ENCODE measurements at regions of chr16 and their contacts with region 1.

Region 1: DNA sequence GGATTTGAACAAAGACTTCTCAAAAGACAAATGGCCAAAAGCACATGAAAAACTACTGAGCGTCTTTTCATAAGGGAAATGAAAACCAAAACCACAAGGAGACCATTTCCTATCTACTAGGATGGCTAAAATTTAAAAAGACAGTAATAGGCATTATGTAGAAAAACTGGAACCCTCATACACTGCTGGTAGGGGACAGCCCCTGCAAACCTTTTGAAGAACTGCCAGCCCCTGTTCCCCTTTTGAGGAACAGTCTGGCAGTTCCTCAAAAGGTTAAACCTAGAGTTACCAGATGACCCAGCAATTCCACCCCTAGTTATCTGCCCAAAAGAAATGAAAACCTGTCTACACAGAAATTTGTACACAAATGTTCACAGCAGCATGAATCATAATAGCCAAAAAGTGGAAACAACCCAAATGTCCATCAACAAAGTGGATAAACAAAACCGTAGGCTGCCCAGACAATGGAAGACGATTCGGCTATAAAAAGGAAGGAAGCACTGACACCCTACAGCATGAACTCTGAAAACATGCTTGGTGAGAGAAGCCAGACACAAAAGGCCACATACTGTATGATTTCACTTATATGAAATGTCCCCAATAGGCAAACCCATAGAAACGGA is 22.9 kb downstream of the CDIP1 start:
- DNase-seq: no peak
- H3K4me3 Mint-ChIP-seq: peak overlapping the region; percentile 69
- H3K27ac Mint-ChIP-seq: peak overlapping the region; percentile 79
- H3K4me1 Mint-ChIP-seq: peaks cover 34% of the 10 kb centered on the region
- H3K27me3 Mint-ChIP-seq: no peaks in the 10 kb centered on the region

Region 2: GRCh38 chr16:4298761-4299522 is 216.8 kb before region 1 on chr16:
- intact Hi-C with region 1: no loop called
- DNase-seq: no peak
- H3K4me3 Mint-ChIP-seq: no peak overlapping the region
- H3K27ac Mint-ChIP-seq: no peak overlapping the region
- H3K4me1 Mint-ChIP-seq: no peaks in the 10 kb centered on the region
- H3K27me3 Mint-ChIP-seq: peaks cover 2% of the 10 kb centered on the region

Region 3: DNA sequence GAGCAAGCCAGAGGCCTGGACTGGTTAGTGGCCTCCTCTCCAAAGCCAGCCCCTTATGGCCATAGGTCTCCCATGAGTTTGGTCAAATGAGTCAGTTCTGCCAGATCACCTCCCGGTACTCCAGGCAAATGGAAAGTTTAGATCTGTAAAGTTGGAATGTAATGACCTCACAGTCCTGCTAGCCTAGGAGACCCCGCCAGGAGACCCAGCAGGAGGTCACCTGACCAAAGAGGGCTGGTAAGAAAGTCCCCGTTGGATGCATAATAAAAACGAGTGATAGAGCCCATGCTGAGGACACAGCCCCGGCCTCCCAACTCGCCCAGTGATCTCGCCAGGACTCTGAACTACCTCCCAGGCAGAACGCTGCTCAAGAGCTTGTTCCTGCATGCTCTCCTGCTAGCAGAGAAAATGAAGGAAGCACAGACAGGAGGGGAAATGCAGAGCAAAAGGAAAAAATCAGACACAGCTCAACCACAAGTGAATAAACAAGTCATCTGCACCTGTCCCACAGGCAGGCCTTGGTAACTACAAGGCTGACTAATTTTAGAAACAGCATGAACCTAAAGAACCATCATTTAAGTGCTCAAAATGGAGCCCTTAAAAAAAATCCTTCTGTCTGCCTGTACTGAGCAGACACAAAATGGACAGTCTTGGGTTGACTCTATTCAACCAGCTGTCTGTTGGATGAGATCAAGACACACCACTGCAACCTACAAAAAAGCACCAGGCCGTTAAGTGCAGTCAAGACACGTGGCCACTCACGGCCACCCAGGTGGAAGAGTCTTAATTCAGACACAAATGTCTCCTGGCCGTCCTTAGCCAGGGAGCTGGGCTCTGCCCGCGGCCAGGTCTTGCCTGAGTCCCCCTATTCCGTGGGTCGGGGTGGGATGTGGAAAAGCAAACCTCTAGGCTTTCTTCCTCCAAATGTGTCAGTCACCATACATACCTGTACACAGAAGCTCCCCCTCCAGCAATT is 13.7 kb after region 1 on chr16:
- intact Hi-C with region 1: loop called (anchors 2 kb)
- DNase-seq: peak; percentile 76
- H3K4me3 Mint-ChIP-seq: peak overlapping the region; percentile 56
- H3K27ac Mint-ChIP-seq: peak overlapping the region; percentile 92
- H3K4me1 Mint-ChIP-seq: peaks cover 35% of the 10 kb centered on the region
- H3K27me3 Mint-ChIP-seq: no peaks in the 10 kb centered on the region

Region 4: GRCh38 chr16:4548124-4548523 is 32.4 kb after region 1 on chr16:
- intact Hi-C with region 1: loop called (anchors 2 kb)
- DNase-seq: no peak
- H3K4me3 Mint-ChIP-seq: no peak overlapping the region
- H3K27ac Mint-ChIP-seq: no peak overlapping the region
- H3K4me1 Mint-ChIP-seq: peaks cover 7% of the 10 kb centered on the region
- H3K27me3 Mint-ChIP-seq: peaks cover 19% of the 10 kb centered on the region

Measured in activated CD4-positive, alpha-beta T cell treated with anti-CD3 and anti-CD28 coated beads, Interleukin-2, amount 10 ng/mL, durations not matched to agents 24 days and 14 days (primary cell).